ENCODE measurements at regions of chr7 and their contacts with region 1.

Region 1: DNA sequence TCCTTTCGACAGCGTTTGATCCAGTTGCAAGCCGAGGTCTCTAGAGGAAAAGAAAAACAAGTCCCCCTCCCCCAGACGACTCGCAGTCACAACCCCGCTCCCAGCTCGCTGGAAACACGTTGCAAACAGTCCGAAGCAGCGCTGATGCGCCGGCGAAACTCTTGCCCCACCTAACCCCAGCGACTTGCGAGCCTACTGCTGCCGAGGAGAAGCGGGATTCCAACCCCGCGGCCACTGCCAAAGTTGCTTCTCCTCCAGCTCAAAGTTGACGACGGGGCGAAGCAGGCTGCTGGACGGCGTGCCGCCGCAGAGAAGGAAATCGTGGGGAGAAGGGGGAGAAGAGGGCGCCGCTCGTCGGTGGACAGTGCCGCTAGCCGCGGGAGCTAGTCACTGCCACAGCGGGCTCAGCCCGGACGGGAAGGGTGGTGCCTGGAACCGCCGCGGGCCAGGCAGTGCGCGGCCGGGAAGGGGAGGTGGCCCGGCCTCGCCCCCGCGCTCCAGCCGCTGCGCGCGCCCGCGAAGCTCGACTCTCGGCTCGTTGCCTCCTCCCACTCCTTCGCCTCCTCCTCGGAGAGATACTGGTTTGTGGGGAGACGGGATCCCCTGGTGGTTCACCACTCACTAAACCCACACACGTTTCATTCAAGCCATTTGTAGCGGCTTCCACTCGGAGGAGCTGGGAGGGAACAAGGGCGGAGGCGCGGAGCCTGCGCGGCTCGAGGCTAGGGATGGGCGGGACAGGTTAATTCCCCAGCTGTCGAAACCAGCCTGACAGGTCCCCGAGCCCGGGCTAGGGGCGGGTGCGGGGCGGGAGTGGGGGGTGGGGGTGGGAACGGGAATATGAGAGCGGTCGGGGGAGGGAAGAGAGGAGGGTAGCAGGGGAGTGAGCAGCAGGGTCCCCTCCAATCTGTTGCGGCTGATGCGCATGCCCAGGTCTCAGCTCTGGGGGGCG is at the start of gene GPR37:
- DNase-seq: peak; percentile 93
- ATAC-seq: peak; percentile 89
- H3K4me3 ChIP-seq: peak within 1 kb of the TSS; percentile 73
- H3K27ac ChIP-seq: peak within 1 kb of the TSS; percentile 78
- H3K4me1 ChIP-seq: peaks cover 2% of the 10 kb centered on the region; the same call in 1 of the 2 replicates
- H3K27me3 ChIP-seq: no peaks in the 10 kb centered on the region
- CTCF ChIP-seq: peak; percentile 74
- POLR2A ChIP-seq: no peak
- RAD21 ChIP-seq: peak; percentile 83
- total RNA-seq, gene GPR37: 9.2 and 9.3 TPM in 2 replicates

Region 2: DNA sequence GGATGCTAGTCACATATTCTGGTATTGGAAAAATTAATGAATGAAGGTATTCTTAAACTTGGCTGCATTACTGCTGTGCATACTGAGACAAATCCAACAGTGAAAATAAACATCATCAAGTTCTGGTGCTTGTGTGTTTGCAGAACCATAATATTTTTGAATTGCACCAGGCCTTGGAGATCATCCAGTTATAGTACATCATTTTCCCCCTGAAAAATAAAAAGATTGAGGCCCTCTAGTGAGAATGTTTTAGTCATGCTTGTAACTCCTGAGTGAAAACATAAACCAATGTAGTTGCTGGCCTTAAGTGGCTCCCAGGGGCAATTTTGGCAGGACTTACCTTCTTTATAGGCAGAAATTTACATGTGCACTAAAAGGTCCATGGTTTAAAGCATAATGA is 514.0 kb before region 1 on chr7:
- CTCF ChIA-PET with region 1: interaction called, 3 read pairs
- POLR2A ChIA-PET with region 1: no interaction called
- dilution Hi-C with region 1: no loop called
- in situ Hi-C with region 1: no loop called
- intact Hi-C with region 1: loop called (anchors 2 kb)
- DNase-seq: peak; percentile 46
- ATAC-seq: peak; percentile 30; the same call in 1 of the 2 replicates
- H3K4me3 ChIP-seq: no peak overlapping the region
- H3K27ac ChIP-seq: no peak overlapping the region
- H3K4me1 ChIP-seq: peaks cover 5% of the 10 kb centered on the region; the same call in 1 of the 2 replicates
- H3K27me3 ChIP-seq: no peaks in the 10 kb centered on the region
- CTCF ChIP-seq: no peak
- POLR2A ChIP-seq: no peak
- RAD21 ChIP-seq: no peak

Region 3: GRCh38 chr7:124536156-124536762 is 229.4 kb before region 1 on chr7:
- CTCF ChIA-PET with region 1: interaction called, 3 read pairs
- POLR2A ChIA-PET with region 1: no interaction called
- dilution Hi-C with region 1: no loop called
- in situ Hi-C with region 1: no loop called
- intact Hi-C with region 1: loop called (anchors 5 kb)
- DNase-seq: peak; percentile 59
- ATAC-seq: peak; percentile 48
- H3K4me3 ChIP-seq: no peak overlapping the region
- H3K27ac ChIP-seq: 0 out of 2 replicates have a peak overlapping the region, but pooled peaks have one; percentile 41
- H3K4me1 ChIP-seq: peaks cover 7% of the 10 kb centered on the region
- H3K27me3 ChIP-seq: no peaks in the 10 kb centered on the region
- CTCF ChIP-seq: no peak
- POLR2A ChIP-seq: no peak
- RAD21 ChIP-seq: no peak

Region 4: GRCh38 chr7:124723012-124723411 is 42.7 kb before region 1 on chr7:
- CTCF ChIA-PET with region 1: interaction called, 3 read pairs
- POLR2A ChIA-PET with region 1: no interaction called
- dilution Hi-C with region 1: no loop called
- in situ Hi-C with region 1: no loop called
- intact Hi-C with region 1: loop called (anchors 2 kb)
- DNase-seq: peak; percentile 88
- ATAC-seq: peak; percentile 65
- H3K4me3 ChIP-seq: no peak overlapping the region
- H3K27ac ChIP-seq: no peak overlapping the region
- H3K4me1 ChIP-seq: peaks cover 5% of the 10 kb centered on the region
- H3K27me3 ChIP-seq: no peaks in the 10 kb centered on the region
- CTCF ChIP-seq: no peak
- POLR2A ChIP-seq: no peak
- RAD21 ChIP-seq: no peak

Region 5: GRCh38 chr7:124784879-124785818 is 19.5 kb after region 1 on chr7:
- CTCF ChIA-PET with region 1: interaction called, 12 read pairs
- POLR2A ChIA-PET with region 1: no interaction called
- dilution Hi-C with region 1: no loop called
- in situ Hi-C with region 1: no loop called
- intact Hi-C with region 1: no loop called
- DNase-seq: peak; percentile 73
- ATAC-seq: peak; percentile 85
- H3K4me3 ChIP-seq: no peak overlapping the region
- H3K27ac ChIP-seq: no peak overlapping the region
- H3K4me1 ChIP-seq: peaks cover 2% of the 10 kb centered on the region; the same call in 1 of the 2 replicates
- H3K27me3 ChIP-seq: no peaks in the 10 kb centered on the region
- CTCF ChIP-seq: peak; percentile 95
- POLR2A ChIP-seq: 0 out of 2 replicates have a peak, but pooled peaks have one; percentile 43
- RAD21 ChIP-seq: peak; percentile 97